KBM-7 (cell line): ENCODE measurements at regions of chr2 and their contacts with region 1.

Region 1: DNA sequence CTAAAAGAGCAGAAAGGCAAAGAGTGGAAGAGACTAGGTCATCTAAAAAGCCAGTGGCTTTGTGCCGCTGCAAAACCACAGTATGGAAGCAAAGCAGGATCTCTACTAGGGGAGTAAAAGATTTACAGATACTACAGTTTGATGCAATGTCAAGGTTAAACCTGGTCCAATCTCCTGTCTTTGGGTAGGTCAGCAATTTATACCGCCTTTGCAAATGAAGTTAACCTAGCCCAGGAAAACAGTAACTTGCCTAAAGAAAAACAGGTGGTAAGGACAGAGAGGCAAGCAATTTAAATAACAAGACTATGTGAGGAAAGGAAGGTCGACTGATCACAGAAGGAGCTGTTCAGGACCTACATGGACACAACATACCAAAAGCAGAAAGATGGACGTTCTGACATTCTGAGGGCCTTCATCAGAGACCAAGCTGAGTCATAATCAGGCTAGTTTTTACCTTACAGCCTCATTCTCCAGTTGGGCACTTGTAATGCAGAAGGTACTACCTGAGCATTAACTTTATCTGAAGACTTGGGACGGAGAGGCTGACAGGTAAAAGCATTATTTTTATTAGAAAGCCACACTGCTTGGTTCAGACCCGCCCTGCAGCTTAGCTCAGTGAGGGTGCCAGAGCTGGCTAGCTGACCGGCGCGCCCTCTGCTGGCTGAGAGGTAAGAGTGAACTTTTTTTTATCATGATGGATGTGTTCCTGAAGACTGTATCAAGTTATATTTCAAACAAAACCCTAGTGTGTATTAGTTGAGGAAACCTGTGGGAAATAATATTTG is 15.9 kb downstream of the CDKL4 start:
- DNase-seq: peak; percentile 77

Region 2: DNA sequence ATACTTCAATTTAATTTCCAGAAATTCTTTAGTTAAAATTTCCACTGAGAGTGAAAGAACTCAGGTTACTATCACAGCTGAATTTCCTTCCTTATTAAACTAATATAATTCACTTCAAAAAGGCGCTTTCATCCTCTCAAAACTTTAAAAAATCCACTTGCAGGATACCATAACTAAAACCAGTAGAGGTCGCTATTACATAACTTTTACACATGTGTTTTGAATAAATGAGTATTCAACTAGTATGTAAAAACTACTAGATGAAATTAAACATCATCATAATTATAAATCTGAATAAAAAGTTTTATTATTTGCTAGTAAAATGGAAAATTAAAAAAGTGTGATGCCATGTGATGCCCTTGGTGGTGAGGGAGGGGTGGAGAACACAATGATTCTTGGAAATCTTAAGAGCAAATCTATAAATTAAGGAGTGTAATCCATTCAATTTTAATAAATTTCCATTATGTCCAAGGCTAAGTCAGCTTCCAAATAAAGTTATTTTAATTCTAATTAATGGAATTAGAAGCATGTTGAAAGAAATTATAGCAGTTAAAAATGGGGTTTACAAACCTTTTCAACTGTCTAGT is 168.4 kb before region 1 on chr2:
- in situ Hi-C with region 1: loop called (anchors 25 kb)
- DNase-seq: peak; percentile 57